MCF 10A (cell line): ENCODE measurements at regions of chr11 and their contacts with region 1.

Region 1: GRCh38 chr11:124953753-124954589 is at the start of gene CCDC15:
- DNase-seq: peak; percentile 98
- H3K4me3 Mint-ChIP-seq: no peak within 1 kb of the TSS
- H3K27ac Mint-ChIP-seq: no peak within 1 kb of the TSS
- H3K4me1 Mint-ChIP-seq: peaks cover 9% of the 10 kb centered on the region
- H3K27me3 Mint-ChIP-seq: no peaks in the 10 kb centered on the region
- CTCF ChIP-seq: no peak
- total RNA-seq, gene CCDC15: 2.8 and 3.4 TPM in 2 replicates

Region 2: DNA sequence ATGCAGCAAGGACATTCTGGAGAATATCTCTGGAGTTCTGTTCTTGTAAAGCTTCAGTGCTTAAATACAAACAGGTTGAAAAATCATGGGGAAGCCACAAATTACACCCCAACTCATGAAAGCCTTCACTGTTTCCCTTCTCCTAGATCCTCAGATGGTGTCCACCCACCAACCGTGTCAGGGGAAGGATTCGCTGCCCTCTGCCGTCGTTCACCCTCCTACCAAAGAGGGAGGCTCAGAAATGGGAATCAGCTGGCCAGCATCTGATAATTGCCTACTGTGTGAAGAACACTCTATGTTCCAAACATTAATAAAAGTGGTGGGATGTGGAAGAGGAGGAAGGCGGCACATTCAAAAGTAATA is 10.7 kb before region 1 on chr11:
- CTCF ChIA-PET with region 1: interaction called, 3 read pairs
- POLR2A ChIA-PET with region 1: interaction called, 16 read pairs
- intact Hi-C with region 1: no loop called
- DNase-seq: no peak
- H3K4me3 Mint-ChIP-seq: no peak overlapping the region
- H3K27ac Mint-ChIP-seq: no peak overlapping the region
- H3K4me1 Mint-ChIP-seq: peaks cover 9% of the 10 kb centered on the region
- H3K27me3 Mint-ChIP-seq: no peaks in the 10 kb centered on the region
- CTCF ChIP-seq: no peak